Tibial artery (tissue), 4 donors: ENCODE measurements at regions of chr14 and their contacts with region 1.

Region 1: DNA sequence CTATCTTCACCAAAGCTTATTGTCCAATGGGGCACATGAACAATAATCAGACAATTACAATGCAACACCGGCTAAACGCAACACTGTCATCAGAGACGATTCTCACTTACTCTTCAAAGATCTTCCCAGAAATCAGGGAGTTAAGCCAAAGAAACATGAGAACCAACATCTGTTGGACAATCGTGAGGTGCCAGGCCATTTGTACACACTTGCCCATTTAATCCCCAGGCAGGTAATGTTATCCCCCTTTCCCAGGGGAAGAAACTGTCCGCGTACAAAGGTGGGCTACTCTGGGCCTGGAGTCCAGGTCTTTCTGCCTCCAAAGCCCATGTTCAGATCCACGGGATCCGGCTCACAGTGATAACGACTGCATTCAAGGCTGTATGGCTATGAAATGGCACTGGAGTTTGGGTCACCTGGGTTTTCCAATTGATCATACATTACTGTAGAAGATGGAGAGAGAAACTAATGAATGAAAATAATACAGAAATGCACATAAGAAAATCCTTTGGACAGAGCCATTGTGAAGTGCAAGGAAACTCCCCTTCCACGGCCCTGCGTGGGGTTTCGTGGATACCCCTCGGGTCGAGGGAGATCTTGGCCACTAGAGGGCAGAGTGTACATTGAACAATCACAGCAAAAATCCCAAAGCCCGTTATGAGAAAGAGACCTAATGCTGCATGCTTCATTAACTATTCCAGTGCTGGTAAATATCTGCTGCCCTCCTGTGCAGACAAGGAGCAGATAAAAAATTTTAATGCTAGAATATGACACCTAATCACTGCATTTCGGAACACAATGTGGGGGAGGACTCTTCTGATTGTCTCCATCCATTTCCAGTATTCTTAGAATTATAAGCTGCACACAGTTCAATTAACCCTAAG is 111.4 kb downstream of the EGLN3 start:
- DNase-seq: peak in 1 of 2 donors; percentile 40
- H3K4me3 ChIP-seq: no peak overlapping the region
- H3K27ac ChIP-seq: no peak overlapping the region
- H3K4me1 ChIP-seq: peaks cover 0 to 5% (median 2%) of the 10 kb centered on the region in 4 donors
- H3K27me3 ChIP-seq: no peaks in the 10 kb centered on the region
- CTCF ChIP-seq: peak; percentile 77 to 79

Region 2: DNA sequence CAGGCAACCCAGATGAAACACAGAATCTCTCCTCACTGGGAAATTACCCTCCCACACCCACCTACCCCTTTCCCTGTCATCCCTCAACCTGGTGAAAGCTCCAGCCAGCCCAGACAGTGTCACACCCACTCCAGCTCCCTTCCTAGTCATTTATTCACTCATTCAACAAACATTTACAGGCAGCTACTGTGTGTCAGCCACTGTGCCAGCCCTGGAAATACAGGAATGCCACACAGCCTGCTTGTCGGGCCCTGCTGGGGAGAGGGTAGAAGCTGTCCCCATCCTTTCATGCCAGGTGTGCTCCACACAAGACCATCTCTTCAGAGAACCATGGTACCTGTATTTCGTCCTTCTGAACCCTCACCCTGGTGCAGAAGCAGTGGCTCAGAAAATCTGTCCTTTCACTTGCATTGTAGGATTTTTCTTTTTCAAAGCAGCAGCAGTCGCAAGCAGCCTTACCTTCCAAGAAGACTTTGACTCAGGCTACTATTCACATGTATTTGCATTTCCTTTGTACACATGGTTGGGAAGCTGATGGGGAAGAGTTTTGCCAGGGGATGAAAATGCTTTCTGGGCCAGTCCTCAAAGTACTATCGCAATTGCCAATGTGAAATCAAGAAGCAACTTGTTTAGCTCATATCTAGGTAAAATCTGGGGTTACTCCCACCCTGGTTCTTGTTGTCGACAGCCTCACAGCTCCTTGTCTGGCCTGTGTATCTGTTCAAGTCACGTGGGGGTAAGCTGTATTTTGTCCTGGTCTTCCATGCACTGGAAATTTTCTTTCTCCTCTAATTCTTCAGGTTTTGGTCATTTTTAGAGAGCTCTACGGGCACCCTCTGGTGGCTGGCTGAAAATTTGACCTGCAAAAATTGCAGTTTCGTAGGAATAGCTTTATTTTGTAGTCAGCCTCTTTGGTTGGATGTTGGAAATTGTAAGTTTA is 258.9 kb after region 1 on chr14:
- intact Hi-C with region 1: loop called (anchors 5 kb)
- DNase-seq: peak in 1 of 2 donors; percentile 30
- H3K4me3 ChIP-seq: no peak overlapping the region
- H3K27ac ChIP-seq: no peak overlapping the region
- H3K4me1 ChIP-seq: peaks cover 0 to 9% (median 0%) of the 10 kb centered on the region in 4 donors
- H3K27me3 ChIP-seq: no peaks in the 10 kb centered on the region
- CTCF ChIP-seq: peak; percentile 69 to 82

Region 3: GRCh38 chr14:34223302-34224148 is 384.1 kb after region 1 on chr14:
- intact Hi-C with region 1: loop called (anchors 2 kb)
- DNase-seq: no peak
- H3K4me3 ChIP-seq: no peak overlapping the region
- H3K27ac ChIP-seq: no peak overlapping the region
- H3K4me1 ChIP-seq: no peaks in the 10 kb centered on the region
- H3K27me3 ChIP-seq: no peaks in the 10 kb centered on the region
- CTCF ChIP-seq: no peak